GM12878 (cell line): ENCODE measurements at regions of chr6 and their contacts with region 1.

Region 1: DNA sequence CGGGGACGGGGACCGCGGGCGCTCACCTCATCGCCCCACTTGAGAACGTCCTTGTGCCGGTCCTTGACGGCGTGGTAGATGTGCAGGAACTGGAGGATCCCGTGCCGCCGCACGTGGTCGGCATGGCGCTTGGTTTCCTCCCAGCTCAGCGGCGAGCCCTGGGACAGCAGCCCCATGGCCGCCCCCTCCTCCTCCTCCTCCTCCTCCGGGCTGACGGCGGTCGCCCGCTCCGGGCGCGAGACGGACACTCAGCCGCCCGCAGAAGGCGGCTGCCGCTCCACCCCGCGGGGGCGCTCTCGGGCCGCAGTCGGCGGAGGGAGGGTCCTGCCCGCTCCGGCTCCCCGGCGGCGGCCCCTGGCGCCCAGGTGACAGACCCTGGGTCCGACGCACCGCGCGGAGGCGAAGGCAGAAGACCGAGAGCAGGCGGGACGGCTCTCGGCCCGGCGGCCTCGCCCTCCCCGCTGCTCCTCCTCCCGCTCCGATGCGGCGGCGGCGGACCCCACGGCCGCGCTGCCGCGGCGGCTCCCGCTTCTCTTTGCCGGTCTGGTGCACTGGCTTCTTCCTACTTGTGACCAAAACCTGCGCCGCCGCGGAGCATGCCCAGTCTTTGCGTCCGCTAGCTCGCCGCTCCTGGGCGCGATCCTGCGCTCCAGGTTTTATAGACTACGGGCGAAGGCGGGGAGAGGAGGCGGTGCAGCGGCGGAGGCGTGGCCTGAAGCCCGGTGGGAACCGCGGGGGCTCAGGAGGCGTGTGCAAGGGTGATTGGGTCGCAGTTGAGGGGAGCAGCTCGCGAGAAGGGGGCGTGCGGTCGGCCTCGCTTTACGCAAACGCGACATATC is at the start of gene GCLC:
- DNase-seq: peak; percentile 74
- ATAC-seq: peak; percentile 78
- H3K4me3 ChIP-seq: peak within 1 kb of the TSS; percentile 92
- H3K27ac ChIP-seq: peak within 1 kb of the TSS; percentile 61
- H3K4me1 ChIP-seq: peaks cover 9% of the 10 kb centered on the region
- H3K27me3 ChIP-seq: peaks cover 0 to 6% of the 10 kb centered on the region in 2 experiments; a peak in 1 of 4 replicates
- CTCF ChIP-seq: peak; percentile 55 to 65 (median 59); a peak in 5 of 6 replicates
- EP300 ChIP-seq: no peak; a peak in 1 of 4 replicates
- POLR2A ChIP-seq: peak; percentile 84
- RAD21 ChIP-seq: peak; percentile 44
- polyA plus RNA-seq, gene GCLC: 7.8 to 8.9 TPM

Region 2: GRCh38 chr6:52953911-52954839 is 590.5 kb before region 1 on chr6:
- CTCF ChIA-PET with region 1: no interaction called
- POLR2A ChIA-PET with region 1: no interaction called
- RAD21 ChIA-PET with region 1: no interaction called
- SMC1A ChIA-PET with region 1: no interaction called
- in situ Hi-C with region 1: no loop called
- intact Hi-C with region 1: no loop called
- DNase-seq: no peak
- ATAC-seq: peak; percentile 89
- H3K4me3 ChIP-seq: no peak overlapping the region
- H3K27ac ChIP-seq: no peak overlapping the region
- H3K4me1 ChIP-seq: no peaks in the 10 kb centered on the region
- H3K27me3 ChIP-seq: no peaks in the 10 kb centered on the region
- CTCF ChIP-seq: no peak
- EP300 ChIP-seq: no peak
- POLR2A ChIP-seq: no peak
- RAD21 ChIP-seq: no peak

Region 3: GRCh38 chr6:52995913-52996645 is 548.6 kb before region 1 on chr6:
- CTCF ChIA-PET with region 1: no interaction called
- POLR2A ChIA-PET with region 1: no interaction called
- RAD21 ChIA-PET with region 1: no interaction called
- SMC1A ChIA-PET with region 1: no interaction called
- in situ Hi-C with region 1: no loop called
- intact Hi-C with region 1: no loop called
- DNase-seq: peak; percentile 51
- ATAC-seq: peak; percentile 11
- H3K4me3 ChIP-seq: peak overlapping the region; percentile 65
- H3K27ac ChIP-seq: no peak overlapping the region
- H3K4me1 ChIP-seq: no peaks in the 10 kb centered on the region
- H3K27me3 ChIP-seq: no peaks in the 10 kb centered on the region
- CTCF ChIP-seq: no peak
- EP300 ChIP-seq: no peak
- POLR2A ChIP-seq: no peak
- RAD21 ChIP-seq: no peak

Region 4: GRCh38 chr6:53641348-53641747 is 96.7 kb after region 1 on chr6:
- CTCF ChIA-PET with region 1: no interaction called
- POLR2A ChIA-PET with region 1: no interaction called
- RAD21 ChIA-PET with region 1: no interaction called
- SMC1A ChIA-PET with region 1: no interaction called
- in situ Hi-C with region 1: no loop called
- intact Hi-C with region 1: no loop called
- DNase-seq: no peak
- ATAC-seq: no peak
- H3K4me3 ChIP-seq: no peak overlapping the region
- H3K27ac ChIP-seq: no peak overlapping the region
- H3K4me1 ChIP-seq: no peaks in the 10 kb centered on the region
- H3K27me3 ChIP-seq: no peaks in the 10 kb centered on the region
- CTCF ChIP-seq: no peak
- EP300 ChIP-seq: no peak
- POLR2A ChIP-seq: no peak
- RAD21 ChIP-seq: no peak

Region 5: DNA sequence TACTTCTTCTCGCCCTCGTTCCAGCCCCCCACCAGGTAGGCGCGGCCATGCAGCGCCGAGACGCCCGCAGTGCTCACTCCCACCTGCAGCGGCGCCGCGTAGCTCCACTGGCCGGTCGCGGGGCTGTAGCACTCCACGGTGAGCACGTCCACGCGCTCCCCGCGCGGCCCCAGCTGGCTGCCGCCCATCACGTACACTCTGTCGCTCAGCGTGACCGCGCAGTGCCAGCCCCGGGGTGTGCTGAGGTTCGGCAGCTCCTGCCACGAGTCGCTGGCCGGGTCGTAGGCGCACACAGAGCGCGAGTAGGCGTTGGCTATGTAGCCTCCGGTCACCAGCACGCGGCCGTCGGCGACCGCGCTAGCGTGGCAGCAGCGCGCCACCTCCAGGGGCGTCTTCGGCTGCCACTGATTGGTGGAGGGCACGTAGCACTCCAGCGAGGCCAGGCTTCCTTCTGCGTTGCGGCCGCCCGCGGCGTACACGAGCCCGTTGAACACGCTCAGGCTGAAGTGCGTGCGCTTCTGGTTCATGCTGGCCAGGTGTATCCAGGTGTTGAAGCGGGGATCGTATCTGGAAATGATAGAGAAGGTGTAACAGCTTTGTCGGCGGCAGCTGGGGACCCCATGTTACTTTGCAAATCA is 107.2 kb after region 1 on chr6:
- CTCF ChIA-PET with region 1: interaction called, 13 read pairs
- POLR2A ChIA-PET with region 1: no interaction called
- RAD21 ChIA-PET with region 1: interaction called, 5 read pairs
- SMC1A ChIA-PET with region 1: interaction called, 4 read pairs
- in situ Hi-C with region 1: no loop called
- intact Hi-C with region 1: loop called (anchors 1 kb)
- DNase-seq: no peak
- ATAC-seq: peak; percentile 90
- H3K4me3 ChIP-seq: peak overlapping the region; percentile 57; the same call in 1 of the 2 replicates
- H3K27ac ChIP-seq: no peak overlapping the region
- H3K4me1 ChIP-seq: peaks cover 8% of the 10 kb centered on the region
- H3K27me3 ChIP-seq: peaks cover 9 to 16% of the 10 kb centered on the region in 2 experiments
- CTCF ChIP-seq: peak in 1 of 3 experiments; percentile 1; a peak in 2 of 6 replicates
- EP300 ChIP-seq: no peak
- POLR2A ChIP-seq: no peak
- RAD21 ChIP-seq: no peak